Activated T-helper 2 cell treated with anti-CD3 and anti-CD28 coated beads, Interferon-gamma antibody, Interleukin-2, Interleukin-4, amounts not matched to agents 10 μg/mL and 5 μg/mL and 100 μg/mL, durations not matched to agents 14 hours and 24 hours and 36 hours (primary cell): ENCODE measurements at regions of chr7 and their contacts with region 1.

Region 1: DNA sequence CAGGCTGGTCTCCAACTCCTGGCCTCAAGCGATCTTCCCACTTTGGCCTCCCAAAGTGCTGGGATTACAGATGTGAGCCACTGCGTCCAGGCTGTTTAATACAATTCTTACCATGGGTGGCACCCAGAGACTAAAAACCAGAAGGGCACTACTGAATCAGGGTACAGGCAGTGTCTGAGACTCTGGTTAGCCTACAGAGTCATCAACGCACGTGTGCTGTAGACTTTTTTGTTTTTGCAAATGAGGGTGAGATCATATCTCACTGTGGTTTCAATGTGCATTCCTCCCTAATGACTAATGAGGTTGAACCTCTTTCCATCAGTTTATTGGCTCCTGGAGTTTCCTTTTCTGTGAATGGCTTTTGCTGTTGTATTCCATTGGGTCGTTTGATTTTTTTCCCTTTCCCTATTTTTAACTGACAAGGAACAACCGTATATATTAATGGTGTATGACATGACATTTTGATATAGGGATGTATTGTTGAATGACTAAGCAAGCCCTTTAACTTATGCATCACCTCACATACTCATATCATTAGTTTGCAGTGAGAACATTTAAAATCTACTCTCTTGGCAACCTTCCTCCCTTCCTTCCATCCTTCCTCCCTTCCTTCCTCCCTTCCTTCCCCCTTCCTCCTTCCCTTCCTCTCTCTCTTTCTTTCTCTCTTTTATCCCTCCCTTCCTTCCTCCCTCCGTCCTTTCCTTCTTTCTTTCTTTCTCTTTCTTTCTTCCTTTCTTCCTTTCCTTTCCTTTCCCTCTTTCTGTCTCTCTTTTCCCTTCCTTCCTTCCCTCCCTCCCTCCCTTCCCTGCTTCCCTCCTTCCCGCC is 9.3 kb upstream of the METTL27 start:
- DNase-seq: peak; percentile 27
- H3K4me3 Mint-ChIP-seq: no peak overlapping the region
- H3K27ac Mint-ChIP-seq: peak overlapping the region; percentile 31
- H3K4me1 Mint-ChIP-seq: peaks cover 32% of the 10 kb centered on the region
- H3K27me3 Mint-ChIP-seq: peaks cover 26% of the 10 kb centered on the region

Region 2: GRCh38 chr7:73811760-73812168 is 39.9 kb before region 1 on chr7:
- intact Hi-C with region 1: loop called (anchors 1 kb)
- DNase-seq: peak; percentile 26
- H3K4me3 Mint-ChIP-seq: no peak overlapping the region
- H3K27ac Mint-ChIP-seq: no peak overlapping the region
- H3K4me1 Mint-ChIP-seq: no peaks in the 10 kb centered on the region
- H3K27me3 Mint-ChIP-seq: peaks cover 5% of the 10 kb centered on the region